ENCODE measurements at regions of chr1 and their contacts with region 1.

Region 1: GRCh38 chr1:62544570-62544969 is 52.8 kb upstream of the ANGPTL3 start:
- DNase-seq: no peak
- ATAC-seq: no peak
- H3K4me3 ChIP-seq: no peak overlapping the region
- H3K27ac ChIP-seq: no peak overlapping the region
- H3K4me1 ChIP-seq: no peaks in the 10 kb centered on the region
- H3K27me3 ChIP-seq: no peaks in the 10 kb centered on the region

Region 2: DNA sequence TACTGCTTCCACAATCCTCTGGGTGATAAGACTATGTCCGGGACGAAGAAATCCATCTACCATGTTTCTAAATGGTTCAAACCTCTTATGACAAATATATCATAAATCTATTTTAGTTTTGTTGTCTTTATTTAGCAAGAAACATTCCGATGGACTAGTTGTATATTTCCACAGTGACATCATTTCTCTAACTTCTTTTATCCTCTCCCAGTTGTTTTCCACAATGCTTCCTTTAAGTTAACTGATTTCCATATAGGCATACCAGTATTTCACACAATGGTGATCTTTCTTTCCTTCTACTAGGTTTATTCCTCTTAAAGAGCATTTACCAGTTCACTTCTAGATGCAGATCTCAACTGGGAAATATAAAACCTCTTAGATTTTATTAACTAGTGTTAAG is 62.9 kb before region 1 on chr1:
- intact Hi-C with region 1: no loop called
- DNase-seq: no peak
- ATAC-seq: no peak
- H3K4me3 ChIP-seq: no peak overlapping the region
- H3K27ac ChIP-seq: no peak overlapping the region
- H3K4me1 ChIP-seq: no peaks in the 10 kb centered on the region
- H3K27me3 ChIP-seq: no peaks in the 10 kb centered on the region

Region 3: GRCh38 chr1:62493656-62494055 is 50.9 kb before region 1 on chr1:
- intact Hi-C with region 1: no loop called
- DNase-seq: no peak
- ATAC-seq: no peak
- H3K4me3 ChIP-seq: no peak overlapping the region
- H3K27ac ChIP-seq: no peak overlapping the region
- H3K4me1 ChIP-seq: no peaks in the 10 kb centered on the region
- H3K27me3 ChIP-seq: no peaks in the 10 kb centered on the region

Region 4: GRCh38 chr1:62516600-62516999 is 28.0 kb before region 1 on chr1:
- intact Hi-C with region 1: loop called in 1 of 2 experiments (anchors 2 kb)
- DNase-seq: no peak
- ATAC-seq: no peak
- H3K4me3 ChIP-seq: no peak overlapping the region
- H3K27ac ChIP-seq: no peak overlapping the region
- H3K4me1 ChIP-seq: no peaks in the 10 kb centered on the region
- H3K27me3 ChIP-seq: no peaks in the 10 kb centered on the region

Measured in aorta (tissue), 5 donors.